K562 (cell line): ENCODE measurements at regions of chr6 and their contacts with region 1.

Region 1: DNA sequence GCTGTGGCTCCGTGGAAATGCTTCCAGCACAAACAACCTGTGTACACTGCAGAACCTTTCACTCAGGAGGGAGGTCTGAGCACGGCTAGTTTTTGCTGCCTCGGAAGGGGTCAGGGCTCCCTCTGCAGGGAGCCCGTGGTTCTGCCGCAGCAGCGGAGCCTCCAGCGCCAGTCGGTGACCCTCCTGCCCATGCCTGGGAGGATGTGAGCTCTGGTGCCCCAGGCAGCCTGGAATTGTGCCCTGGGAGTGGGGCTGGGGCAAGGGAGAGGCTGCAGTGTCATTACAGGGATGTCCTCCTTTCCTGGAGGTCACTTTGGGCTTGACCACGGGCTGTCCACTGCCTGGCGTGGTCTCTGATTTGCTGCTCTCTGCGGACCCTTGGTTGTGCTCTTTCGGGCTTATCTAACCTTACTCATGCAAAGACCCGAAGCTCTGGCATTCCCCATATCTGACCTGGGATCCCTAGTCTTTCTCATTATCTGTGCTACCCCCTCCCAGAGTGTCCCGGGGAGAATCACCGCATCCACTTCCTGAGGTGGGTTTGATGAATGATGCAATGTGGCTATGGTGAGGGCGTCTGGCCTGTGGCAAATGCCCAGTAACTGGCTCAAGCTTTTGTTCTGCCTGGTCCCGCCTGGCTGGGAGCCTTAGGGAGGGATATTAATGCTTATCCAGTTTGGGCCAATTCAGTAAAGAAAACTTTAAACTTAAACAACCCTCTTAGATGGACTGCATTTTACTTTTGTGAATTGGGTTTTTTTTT is 59.6 kb upstream of the TAGAP start:
- DNase-seq: peak; percentile 66 to 80 (median 75)
- ATAC-seq: peak; percentile 93
- H3K4me3 ChIP-seq: no peak overlapping the region
- H3K27ac ChIP-seq: no peak overlapping the region
- H3K4me1 ChIP-seq: peaks cover 0 to 10% of the 10 kb centered on the region in 2 experiments; a peak in 3 of 5 replicates
- H3K27me3 ChIP-seq: peaks cover 33 to 52% of the 10 kb centered on the region in 2 experiments
- CTCF ChIP-seq: peak; percentile 93 to 97 (median 96)
- EP300 ChIP-seq: no peak
- POLR2A ChIP-seq: no peak
- RAD21 ChIP-seq: peak; percentile 91 to 92

Region 2: GRCh38 chr6:158686791-158687381 is 417.5 kb before region 1 on chr6:
- CTCF ChIA-PET with region 1: no interaction called
- POLR2A ChIA-PET with region 1: no interaction called
- in situ Hi-C with region 1: loop called (anchors 25 kb)
- intact Hi-C with region 1: no loop called
- DNase-seq: no peak
- ATAC-seq: no peak; the same call in 2 of the 3 replicates
- H3K4me3 ChIP-seq: no peak overlapping the region
- H3K27ac ChIP-seq: no peak overlapping the region
- H3K4me1 ChIP-seq: no peaks in the 10 kb centered on the region
- H3K27me3 ChIP-seq: peaks cover 43 to 57% of the 10 kb centered on the region in 2 experiments
- CTCF ChIP-seq: no peak
- EP300 ChIP-seq: no peak
- POLR2A ChIP-seq: no peak
- RAD21 ChIP-seq: no peak

Region 3: DNA sequence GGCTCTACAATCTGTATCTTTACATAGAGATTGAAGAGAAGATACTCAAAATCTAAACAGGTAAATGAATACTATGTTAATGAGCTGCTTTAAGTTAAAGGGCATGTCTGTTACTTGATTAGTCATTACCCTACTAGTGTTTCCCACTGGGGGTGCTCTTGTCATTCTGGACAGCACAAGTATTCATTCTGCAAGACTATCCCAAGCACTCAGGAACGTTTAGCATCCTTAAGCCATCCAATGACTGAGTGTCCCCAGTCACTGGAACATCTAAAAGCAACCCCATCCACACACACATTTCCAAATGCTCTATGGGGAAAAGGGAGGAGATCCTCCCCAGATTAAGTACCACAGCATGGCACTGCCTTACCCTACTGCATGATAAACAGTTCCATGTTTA is 310.9 kb before region 1 on chr6:
- CTCF ChIA-PET with region 1: no interaction called
- POLR2A ChIA-PET with region 1: no interaction called
- in situ Hi-C with region 1: loop called (anchors 10 kb)
- intact Hi-C with region 1: no loop called
- DNase-seq: peak; percentile 55 to 81 (median 66)
- ATAC-seq: peak; percentile 96
- H3K4me3 ChIP-seq: no peak overlapping the region
- H3K27ac ChIP-seq: no peak overlapping the region
- H3K4me1 ChIP-seq: no peaks in the 10 kb centered on the region
- H3K27me3 ChIP-seq: no peaks in the 10 kb centered on the region
- CTCF ChIP-seq: peak; percentile 71 to 92 (median 84)
- EP300 ChIP-seq: 0 out of 2 replicates have a peak, but pooled peaks have one; percentile 9
- POLR2A ChIP-seq: no peak
- RAD21 ChIP-seq: peak; percentile 84 to 96

Region 4: DNA sequence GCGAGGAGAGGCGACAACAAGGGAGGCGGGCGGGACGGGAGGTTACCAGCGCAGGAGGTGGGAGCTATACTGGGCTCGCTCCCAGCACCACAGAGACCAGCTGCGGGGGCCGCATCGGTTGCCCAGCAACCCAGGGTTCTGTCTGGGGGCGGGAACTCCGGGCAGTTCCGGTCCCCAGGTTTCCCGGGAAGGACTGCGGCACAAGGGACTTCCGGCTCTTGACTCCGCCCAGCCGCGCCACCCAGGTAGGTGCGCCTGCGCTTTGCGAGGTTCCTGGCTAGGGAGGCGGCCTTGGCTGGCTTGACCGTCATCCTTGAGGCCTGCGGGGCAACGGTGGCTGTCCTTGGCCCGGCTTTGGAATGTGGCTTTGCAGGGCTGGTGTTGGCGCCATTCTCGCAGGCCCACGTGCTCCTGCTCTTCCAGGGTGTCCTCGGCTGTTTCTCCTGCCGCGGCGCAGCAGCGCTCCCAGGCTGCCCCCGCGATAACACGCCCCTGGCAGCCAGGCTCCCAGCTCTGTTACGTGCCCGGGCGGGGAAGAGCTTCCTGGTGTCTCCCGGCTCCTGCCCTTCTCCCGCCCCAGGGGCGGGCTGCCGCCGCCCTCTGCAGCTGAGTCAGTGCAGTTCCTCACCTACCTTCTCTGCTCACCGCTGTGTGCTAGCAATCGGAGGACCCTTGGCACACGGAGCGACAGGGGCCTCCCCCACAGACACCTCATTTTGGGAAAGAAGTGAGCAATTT is 104.5 kb before region 1 on chr6 and contains the start of gene RSPH3:
- CTCF ChIA-PET with region 1: no interaction called
- POLR2A ChIA-PET with region 1: no interaction called
- in situ Hi-C with region 1: loop called (anchors 5 kb)
- intact Hi-C with region 1: no loop called
- DNase-seq: peak; percentile 99
- ATAC-seq: peak; percentile 98
- H3K4me3 ChIP-seq: peak within 1 kb of the TSS; percentile 68
- H3K27ac ChIP-seq: peak within 1 kb of the TSS; percentile 90
- H3K4me1 ChIP-seq: peaks cover 9 to 22% of the 10 kb centered on the region in 2 experiments; a peak in 4 of 5 replicates
- H3K27me3 ChIP-seq: no peaks in the 10 kb centered on the region
- CTCF ChIP-seq: peak; percentile 37 to 51 (median 50); a peak in 3 of 6 replicates
- EP300 ChIP-seq: peak; percentile 8; the same call in 1 of the 2 replicates
- POLR2A ChIP-seq: peak; percentile 99
- RAD21 ChIP-seq: peak; percentile 57 to 60
- polyA plus RNA-seq, gene RSPH3: 0.52 to 0.68 TPM

Region 5: GRCh38 chr6:159042003-159042825 is 62.1 kb before region 1 on chr6:
- CTCF ChIA-PET with region 1: interaction called, 14 read pairs
- POLR2A ChIA-PET with region 1: no interaction called
- in situ Hi-C with region 1: loop called (anchors 5 kb)
- intact Hi-C with region 1: loop called (anchors 1 kb)
- DNase-seq: peak; percentile 76 to 86 (median 82)
- ATAC-seq: peak; percentile 97
- H3K4me3 ChIP-seq: no peak overlapping the region
- H3K27ac ChIP-seq: no peak overlapping the region
- H3K4me1 ChIP-seq: no peaks in the 10 kb centered on the region
- H3K27me3 ChIP-seq: peaks cover 53 to 59% of the 10 kb centered on the region in 2 experiments
- CTCF ChIP-seq: peak; percentile 90 to 98 (median 97)
- EP300 ChIP-seq: no peak
- POLR2A ChIP-seq: no peak
- RAD21 ChIP-seq: peak; percentile 76 to 87

Region 6: DNA sequence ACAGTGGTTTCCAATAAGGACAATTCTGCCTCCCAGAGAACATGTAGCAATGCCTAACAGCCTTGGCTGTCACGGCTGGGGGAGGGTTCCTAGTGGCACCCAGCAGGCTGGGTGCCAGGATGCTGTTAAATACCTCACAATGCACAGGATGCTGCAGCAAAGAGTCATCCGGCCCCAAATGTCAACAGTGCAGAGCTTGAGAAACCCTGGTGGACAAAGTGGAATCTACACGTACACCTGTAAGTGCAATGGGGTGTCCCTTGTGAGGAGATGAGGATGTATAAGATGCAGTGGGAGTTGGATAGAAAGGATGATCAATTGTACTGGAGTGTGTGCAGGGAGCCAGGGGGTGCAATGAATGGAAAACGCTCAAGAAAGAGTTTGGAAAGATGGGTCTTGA is 207.3 kb after region 1 on chr6:
- CTCF ChIA-PET with region 1: no interaction called
- POLR2A ChIA-PET with region 1: no interaction called
- in situ Hi-C with region 1: no loop called
- intact Hi-C with region 1: no loop called
- DNase-seq: no peak
- ATAC-seq: peak; percentile 43; the same call in 1 of the 3 replicates
- H3K4me3 ChIP-seq: no peak overlapping the region
- H3K27ac ChIP-seq: no peak overlapping the region
- H3K4me1 ChIP-seq: no peaks in the 10 kb centered on the region; a peak in 1 of 5 replicates
- H3K27me3 ChIP-seq: peaks cover 8 to 22% of the 10 kb centered on the region in 2 experiments; a peak in 4 of 5 replicates
- CTCF ChIP-seq: peak in 1 of 3 experiments; percentile 23; a peak in 1 of 6 replicates
- EP300 ChIP-seq: no peak
- POLR2A ChIP-seq: no peak
- RAD21 ChIP-seq: no peak